ENCODE measurements at regions of chr7 and their contacts with region 1.

Region 1: DNA sequence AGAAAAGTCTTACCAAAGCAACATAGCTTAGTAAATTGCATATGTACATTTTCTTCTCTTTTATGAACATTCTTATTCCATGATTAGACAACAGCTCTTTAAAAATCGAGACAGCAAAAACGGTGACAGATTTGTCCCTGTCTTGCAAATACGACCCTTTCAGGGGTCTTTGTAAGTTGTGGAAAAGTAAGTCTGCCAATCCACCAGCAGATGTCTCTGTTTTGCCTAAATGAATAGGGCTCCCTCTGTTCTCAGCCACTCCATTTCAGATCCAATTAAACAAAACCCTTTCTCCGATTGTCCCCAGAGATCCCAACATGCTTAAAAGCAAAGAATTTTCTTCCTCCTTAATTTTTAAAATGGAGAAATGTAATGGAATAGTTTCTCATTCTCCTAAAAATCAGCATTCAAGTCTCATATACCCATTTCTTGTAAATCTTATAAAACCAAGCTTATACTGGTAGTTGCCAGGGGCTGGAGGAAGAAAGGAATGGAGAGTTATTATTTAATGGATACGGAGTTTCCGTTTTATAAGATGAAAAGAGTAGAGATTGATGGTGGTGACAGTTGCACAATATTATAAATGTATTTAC is 61.0 kb upstream of the NFE2L3 start:
- DNase-seq: no peak
- H3K4me3 Mint-ChIP-seq: no peak overlapping the region
- H3K27ac Mint-ChIP-seq: peak overlapping the region; percentile 39
- H3K4me1 Mint-ChIP-seq: peaks cover 28% of the 10 kb centered on the region
- H3K27me3 Mint-ChIP-seq: peaks cover 8% of the 10 kb centered on the region

Region 2: GRCh38 chr7:25894902-25895791 is 195.9 kb before region 1 on chr7:
- CTCF ChIA-PET with region 1: interaction called, 12 read pairs
- DNase-seq: peak; percentile 75
- H3K4me3 Mint-ChIP-seq: peak overlapping the region; percentile 4
- H3K27ac Mint-ChIP-seq: no peak overlapping the region
- H3K4me1 Mint-ChIP-seq: peaks cover 29% of the 10 kb centered on the region
- H3K27me3 Mint-ChIP-seq: peaks cover 31% of the 10 kb centered on the region

Region 3: DNA sequence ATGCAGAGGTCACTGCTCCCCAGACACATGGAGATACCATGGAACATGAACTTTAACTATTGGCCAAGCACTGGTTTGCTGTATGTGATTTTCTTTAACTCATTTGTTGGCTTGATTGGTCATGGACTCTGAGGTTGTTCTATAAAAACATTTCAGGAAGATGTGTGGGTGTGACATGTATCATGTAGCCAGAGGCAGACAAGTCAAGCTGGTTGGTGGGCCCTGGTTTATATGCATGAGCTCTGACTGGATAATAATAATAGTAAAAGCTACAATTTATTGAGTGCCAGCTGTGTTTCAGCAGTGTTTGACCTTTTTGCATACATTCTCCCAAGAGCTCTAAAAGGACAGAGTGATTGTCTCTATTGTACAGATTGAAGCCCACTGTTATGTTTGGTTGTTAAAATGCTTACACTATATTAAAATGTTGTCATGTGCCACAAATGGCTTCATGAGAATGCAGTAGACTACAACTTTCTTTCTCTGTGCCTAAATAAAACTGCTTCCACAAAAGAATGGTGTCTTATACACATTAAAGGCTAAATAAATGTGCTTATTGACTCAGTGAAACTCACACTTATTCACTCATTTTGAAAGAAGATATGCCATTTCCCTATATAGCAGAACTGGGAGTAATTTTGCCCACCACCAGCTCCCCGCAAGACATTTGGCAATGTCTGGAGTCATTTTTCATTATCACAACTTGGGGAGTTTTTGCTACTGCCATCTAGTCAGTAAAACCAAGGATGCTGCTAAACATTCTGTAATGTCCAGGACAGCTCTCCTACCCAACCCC is 182.7 kb before region 1 on chr7:
- CTCF ChIA-PET with region 1: no interaction called
- DNase-seq: no peak
- H3K4me3 Mint-ChIP-seq: no peak overlapping the region
- H3K27ac Mint-ChIP-seq: no peak overlapping the region
- H3K4me1 Mint-ChIP-seq: no peaks in the 10 kb centered on the region
- H3K27me3 Mint-ChIP-seq: peaks cover 9% of the 10 kb centered on the region

Region 4: DNA sequence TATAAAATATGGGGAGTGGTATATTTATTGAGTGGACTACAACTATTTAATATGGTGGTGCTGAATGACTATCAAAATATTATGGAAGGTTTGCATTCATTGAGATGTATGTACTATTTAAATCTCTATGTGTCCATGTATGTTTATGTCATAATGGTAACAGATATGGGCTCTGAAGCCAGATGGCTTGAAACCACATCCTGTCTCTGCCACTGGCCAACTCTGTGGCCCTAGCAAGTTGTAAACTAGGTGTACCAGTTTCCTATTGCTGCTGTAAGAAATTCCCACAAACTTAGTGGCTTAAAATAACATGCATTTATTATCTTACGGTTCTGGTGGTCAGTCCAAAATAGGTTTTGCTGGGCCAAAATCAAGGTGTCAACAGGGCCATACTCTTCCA is 137.2 kb before region 1 on chr7:
- CTCF ChIA-PET with region 1: no interaction called
- DNase-seq: no peak
- H3K4me3 Mint-ChIP-seq: no peak overlapping the region
- H3K27ac Mint-ChIP-seq: no peak overlapping the region
- H3K4me1 Mint-ChIP-seq: peaks cover 20% of the 10 kb centered on the region
- H3K27me3 Mint-ChIP-seq: peaks cover 49% of the 10 kb centered on the region

Region 5: DNA sequence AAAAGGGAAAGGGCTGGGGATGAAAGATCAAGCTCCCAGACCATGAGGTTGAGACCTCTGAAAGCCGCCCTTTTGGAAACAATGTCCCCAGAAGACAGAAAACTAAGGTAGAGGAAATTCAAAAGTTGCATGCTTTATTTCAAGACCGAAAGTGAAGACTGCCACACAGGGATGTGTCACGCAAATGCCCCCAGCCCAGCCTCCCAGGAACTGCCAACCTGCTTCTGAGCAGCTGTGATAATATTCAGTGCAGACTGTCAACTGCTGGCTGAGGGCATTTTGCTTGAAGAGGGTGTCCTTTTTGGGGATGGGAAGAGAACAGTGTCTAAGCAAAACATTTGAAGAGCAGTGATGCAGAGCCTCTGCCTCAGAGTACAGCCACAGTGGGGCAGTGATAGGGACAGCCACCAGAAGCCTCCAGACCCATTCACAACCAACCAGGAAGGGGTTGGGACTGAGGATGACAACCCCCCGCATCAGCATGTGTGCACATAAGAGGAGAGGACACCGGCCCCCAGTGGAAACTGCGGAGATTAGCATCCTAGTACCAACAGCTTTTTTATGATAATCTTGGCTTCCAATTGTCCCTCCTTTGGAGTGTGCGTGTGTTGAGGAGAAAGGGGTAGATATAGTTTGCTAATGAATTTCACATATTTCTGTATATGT is 26.3 kb after region 1 on chr7:
- CTCF ChIA-PET with region 1: interaction called, 15 read pairs
- DNase-seq: no peak
- H3K4me3 Mint-ChIP-seq: no peak overlapping the region
- H3K27ac Mint-ChIP-seq: no peak overlapping the region
- H3K4me1 Mint-ChIP-seq: peaks cover 3% of the 10 kb centered on the region
- H3K27me3 Mint-ChIP-seq: peaks cover 8% of the 10 kb centered on the region

Region 6: DNA sequence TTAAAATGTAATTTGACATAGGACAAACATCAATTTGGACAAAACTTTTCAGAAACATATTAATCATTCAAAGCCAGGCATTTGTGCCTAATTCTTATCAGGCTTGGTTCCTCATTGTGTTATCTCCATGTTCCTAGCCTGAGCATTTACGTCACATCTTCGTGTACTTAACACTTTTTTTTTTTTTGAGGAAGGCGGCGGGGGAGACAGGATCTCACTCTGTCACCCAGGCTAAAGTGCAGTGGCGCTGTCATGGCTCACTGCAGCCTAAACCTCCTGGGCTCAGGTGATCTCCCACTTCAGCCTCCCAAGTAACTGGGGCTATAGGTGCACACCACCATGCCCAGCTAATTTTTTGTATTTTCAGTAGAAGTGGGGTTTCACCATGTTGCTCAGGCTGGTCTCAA is 89.8 kb after region 1 on chr7:
- CTCF ChIA-PET with region 1: interaction called, 41 read pairs
- DNase-seq: no peak
- H3K4me3 Mint-ChIP-seq: no peak overlapping the region
- H3K27ac Mint-ChIP-seq: no peak overlapping the region
- H3K4me1 Mint-ChIP-seq: peaks cover 16% of the 10 kb centered on the region
- H3K27me3 Mint-ChIP-seq: no peaks in the 10 kb centered on the region

Region 7: DNA sequence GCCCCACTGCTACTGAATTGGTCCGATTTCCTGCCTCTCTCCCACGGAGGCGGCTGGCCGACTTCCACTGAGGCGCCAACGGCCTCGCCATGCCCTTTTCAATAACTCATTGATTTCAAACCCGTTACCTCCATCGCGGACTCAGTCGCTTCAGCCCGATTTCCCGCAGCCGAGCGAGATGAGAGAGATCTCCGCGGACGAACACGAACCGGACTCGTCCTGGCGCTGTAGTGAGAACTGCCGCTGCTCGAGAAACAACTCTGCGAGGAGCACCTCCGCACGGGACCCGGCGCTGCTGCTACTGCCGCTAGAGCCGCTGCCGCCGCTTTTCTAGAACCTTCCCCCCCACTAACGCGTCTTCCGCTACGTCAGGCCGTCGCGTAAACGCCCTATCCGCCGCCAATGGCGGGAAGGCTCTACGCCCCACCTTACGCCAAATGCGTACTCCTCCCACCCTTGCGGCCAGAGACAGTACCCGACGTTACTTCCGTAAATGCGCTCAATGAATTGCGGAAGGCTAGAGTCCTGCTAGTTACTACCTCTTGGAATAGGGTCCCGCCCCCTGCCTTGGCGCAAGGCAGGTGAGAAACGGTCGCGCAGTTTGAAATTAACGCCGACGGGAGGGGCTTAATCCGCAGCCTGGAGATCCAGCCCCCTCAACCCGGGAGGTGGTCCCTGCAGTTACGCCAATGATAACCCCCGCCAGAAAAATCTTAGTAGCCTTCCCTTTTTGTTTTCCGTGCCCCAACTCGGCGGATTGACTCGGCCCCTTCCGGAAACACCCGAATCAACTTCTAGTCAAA is 109.6 kb after region 1 on chr7 and contains the start of gene HNRNPA2B1:
- CTCF ChIA-PET with region 1: interaction called, 52 read pairs
- DNase-seq: peak; percentile 97
- H3K4me3 Mint-ChIP-seq: peak within 1 kb of the TSS; percentile 99
- H3K27ac Mint-ChIP-seq: peak within 1 kb of the TSS; percentile 100
- H3K4me1 Mint-ChIP-seq: peaks cover 44% of the 10 kb centered on the region
- H3K27me3 Mint-ChIP-seq: peaks cover 15% of the 10 kb centered on the region

Region 8: DNA sequence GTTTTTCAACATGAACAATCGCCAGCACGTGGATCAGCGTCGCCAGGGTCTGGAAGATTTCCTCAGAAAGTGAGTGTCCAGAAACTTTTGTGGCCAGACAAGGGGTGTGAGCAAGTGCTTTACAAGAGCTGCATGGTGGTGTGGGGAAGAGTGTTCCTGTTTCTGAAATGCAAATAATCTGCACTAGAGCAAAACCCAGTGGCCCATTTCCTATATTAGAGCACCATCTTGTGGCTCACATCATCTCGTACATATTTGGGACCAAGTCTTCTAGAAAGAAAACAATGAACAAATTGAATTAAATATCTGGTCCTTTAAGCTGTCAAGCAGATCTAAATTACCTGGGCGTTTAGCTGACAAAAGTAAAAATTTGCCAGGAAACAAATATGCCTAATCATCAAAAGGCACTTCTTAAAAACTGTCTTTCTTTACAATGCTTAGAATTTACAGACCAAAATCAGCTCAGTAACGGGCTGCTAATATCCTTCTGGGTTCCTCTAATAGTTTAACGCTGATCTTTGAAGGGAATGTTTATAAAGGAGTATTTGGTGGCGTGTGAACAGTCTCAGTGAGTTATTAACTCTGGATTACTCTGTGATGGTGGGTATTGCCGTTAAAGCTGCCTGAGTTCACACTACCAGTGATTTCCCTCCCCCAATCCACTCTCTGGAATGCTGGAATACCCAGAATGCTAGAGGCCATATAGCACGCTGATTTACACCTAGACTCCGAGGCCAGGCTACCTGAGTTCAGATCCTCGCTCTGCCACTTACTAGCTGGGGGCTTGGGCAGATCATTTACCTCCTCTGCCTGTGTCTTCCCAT is 274.3 kb after region 1 on chr7:
- CTCF ChIA-PET with region 1: interaction called, 57 read pairs
- DNase-seq: peak; percentile 71
- H3K4me3 Mint-ChIP-seq: no peak overlapping the region
- H3K27ac Mint-ChIP-seq: no peak overlapping the region
- H3K4me1 Mint-ChIP-seq: peaks cover 13% of the 10 kb centered on the region
- H3K27me3 Mint-ChIP-seq: no peaks in the 10 kb centered on the region

Measured in activated naive CD4-positive, alpha-beta T cell treated with anti-CD3 and anti-CD28 coated beads, Interleukin-2, amount 10 ng/mL, durations not matched to agents 7 days and 5 days (primary cell).